H1 (cell line): ENCODE measurements at regions of chr9 and their contacts with region 1.

Region 1: GRCh38 chr9:121286973-121287741 is 19.2 kb downstream of the GSN start:
- DNase-seq: peak; percentile 77 to 88
- H3K4me3 ChIP-seq: peak overlapping the region in 1 of 4 experiments; percentile 45; a peak in 4 of 8 replicates
- H3K27ac ChIP-seq: no peak overlapping the region
- H3K4me1 ChIP-seq: peaks cover 24 to 36% (median 28%) of the 10 kb centered on the region in 4 experiments
- H3K27me3 ChIP-seq: peaks cover 9 to 54% (median 47%) of the 10 kb centered on the region in 4 experiments
- CTCF ChIP-seq: peak; percentile 13 to 42 (median 28)
- EP300 ChIP-seq: peak in 1 of 2 experiments; percentile 66; a peak in 1 of 3 replicates
- POLR2A ChIP-seq: no peak
- RAD21 ChIP-seq: peak; percentile 30 to 44; a peak in 3 of 4 replicates

Region 2: DNA sequence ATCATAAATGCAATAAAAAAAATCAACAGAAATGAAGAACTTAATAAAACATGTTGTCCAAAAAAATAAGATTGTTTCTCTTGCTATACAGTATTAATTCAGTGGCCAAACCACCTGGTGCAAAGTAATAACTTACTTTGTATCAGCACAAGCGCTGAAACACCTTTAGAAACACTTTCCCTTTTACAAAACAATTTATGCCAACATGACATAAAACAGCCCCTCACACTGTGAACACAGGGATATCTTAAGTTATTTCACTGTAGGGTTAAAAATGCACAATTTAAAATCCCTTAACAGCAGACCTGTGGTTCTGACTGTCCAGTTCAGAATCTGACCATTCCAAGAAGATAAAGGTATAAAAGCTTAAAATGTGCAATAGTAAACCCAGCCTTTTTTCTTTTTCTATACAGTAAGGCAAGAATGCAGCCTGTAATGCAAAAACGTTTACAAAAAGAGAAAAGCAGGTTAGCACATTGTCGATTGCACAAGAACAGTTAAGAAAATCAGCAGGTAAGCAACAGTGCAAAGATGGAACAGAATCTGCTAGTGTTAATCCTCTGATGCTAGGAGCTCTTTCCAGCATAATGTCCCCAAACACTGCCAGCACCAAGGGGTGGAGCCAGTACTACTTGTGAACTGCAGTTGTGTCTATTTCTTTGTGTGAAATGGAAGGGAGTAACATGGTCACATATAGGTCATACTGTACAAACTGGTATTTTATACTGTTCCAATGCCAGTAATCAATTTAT is 107.1 kb before region 1 on chr9:
- CTCF ChIA-PET with region 1: no interaction called
- POLR2A ChIA-PET with region 1: no interaction called
- DNase-seq: no peak
- H3K4me3 ChIP-seq: no peak overlapping the region
- H3K27ac ChIP-seq: no peak overlapping the region
- H3K4me1 ChIP-seq: no peaks in the 10 kb centered on the region
- H3K27me3 ChIP-seq: no peaks in the 10 kb centered on the region
- CTCF ChIP-seq: no peak
- EP300 ChIP-seq: no peak
- POLR2A ChIP-seq: no peak
- RAD21 ChIP-seq: no peak

Region 3: DNA sequence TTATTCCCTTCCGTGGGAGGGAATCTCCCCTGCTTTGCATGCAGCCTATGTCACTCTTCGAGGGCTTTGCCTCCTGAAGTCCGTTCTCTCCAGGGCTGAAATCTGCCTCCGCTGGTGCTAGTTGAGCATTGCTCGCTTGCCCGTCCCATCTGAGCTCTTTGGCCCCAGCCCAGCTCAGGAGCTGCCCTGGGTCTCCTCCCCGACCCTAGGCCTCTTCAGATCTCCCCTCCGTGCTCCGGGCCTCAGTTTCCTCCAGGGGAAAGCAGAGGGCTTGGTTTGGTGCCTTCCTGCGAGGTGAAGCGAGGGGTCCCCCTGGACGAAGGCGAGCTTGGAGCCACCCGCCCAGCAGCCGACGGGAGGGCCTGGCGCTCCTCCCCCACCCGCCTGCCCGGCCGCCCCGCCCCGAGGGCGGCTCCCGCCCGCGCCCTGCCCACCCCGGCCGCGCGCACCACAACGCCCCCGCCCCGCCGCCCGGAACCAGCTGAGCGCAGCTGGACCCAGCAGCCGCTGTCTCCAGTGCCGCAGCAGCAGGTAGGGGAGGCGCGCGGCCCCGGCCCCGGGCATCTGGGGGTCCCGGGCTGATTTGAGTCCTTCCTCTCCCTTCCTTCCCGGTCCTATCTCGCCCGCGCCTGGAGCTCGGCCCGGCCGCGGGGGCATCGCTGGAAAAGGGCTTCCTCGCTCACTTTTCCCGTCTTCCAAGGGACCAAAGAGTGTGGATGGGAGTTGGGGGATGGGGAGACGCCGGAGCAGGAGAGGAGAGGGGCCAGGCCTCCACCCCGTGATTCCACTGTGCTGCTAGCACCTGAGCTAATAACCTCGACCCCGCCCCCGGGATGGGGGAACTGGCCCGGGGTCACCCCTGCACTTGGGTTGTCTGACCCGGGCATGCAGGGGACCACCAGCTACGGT is 19.2 kb before region 1 on chr9 and contains the start of gene GSN:
- CTCF ChIA-PET with region 1: interaction called, 7 read pairs
- POLR2A ChIA-PET with region 1: interaction called, 19 read pairs
- DNase-seq: peak in 1 of 2 experiments; percentile 86
- H3K4me3 ChIP-seq: peak within 1 kb of the TSS; percentile 63 to 94 (median 72)
- H3K27ac ChIP-seq: no peak within 1 kb of the TSS
- H3K4me1 ChIP-seq: peaks cover 4 to 31% (median 12%) of the 10 kb centered on the region in 4 experiments
- H3K27me3 ChIP-seq: peaks cover 0 to 30% (median 22%) of the 10 kb centered on the region in 4 experiments; a peak in 6 of 7 replicates
- CTCF ChIP-seq: peak in 2 of 3 experiments; percentile 0 to 32; a peak in 2 of 4 replicates
- EP300 ChIP-seq: no peak
- POLR2A ChIP-seq: 0 out of 3 replicates have a peak, but pooled peaks of 1 of the 2 experiments have one; percentile 8
- RAD21 ChIP-seq: peak in 1 of 2 experiments; percentile 7; a peak in 2 of 4 replicates
- total RNA-seq, gene GSN: 49.7 and 52.3 TPM in 2 replicates